CD4-positive, alpha-beta memory T cell (primary cell): ENCODE measurements at regions of chr6 and their contacts with region 1.

Region 1: DNA sequence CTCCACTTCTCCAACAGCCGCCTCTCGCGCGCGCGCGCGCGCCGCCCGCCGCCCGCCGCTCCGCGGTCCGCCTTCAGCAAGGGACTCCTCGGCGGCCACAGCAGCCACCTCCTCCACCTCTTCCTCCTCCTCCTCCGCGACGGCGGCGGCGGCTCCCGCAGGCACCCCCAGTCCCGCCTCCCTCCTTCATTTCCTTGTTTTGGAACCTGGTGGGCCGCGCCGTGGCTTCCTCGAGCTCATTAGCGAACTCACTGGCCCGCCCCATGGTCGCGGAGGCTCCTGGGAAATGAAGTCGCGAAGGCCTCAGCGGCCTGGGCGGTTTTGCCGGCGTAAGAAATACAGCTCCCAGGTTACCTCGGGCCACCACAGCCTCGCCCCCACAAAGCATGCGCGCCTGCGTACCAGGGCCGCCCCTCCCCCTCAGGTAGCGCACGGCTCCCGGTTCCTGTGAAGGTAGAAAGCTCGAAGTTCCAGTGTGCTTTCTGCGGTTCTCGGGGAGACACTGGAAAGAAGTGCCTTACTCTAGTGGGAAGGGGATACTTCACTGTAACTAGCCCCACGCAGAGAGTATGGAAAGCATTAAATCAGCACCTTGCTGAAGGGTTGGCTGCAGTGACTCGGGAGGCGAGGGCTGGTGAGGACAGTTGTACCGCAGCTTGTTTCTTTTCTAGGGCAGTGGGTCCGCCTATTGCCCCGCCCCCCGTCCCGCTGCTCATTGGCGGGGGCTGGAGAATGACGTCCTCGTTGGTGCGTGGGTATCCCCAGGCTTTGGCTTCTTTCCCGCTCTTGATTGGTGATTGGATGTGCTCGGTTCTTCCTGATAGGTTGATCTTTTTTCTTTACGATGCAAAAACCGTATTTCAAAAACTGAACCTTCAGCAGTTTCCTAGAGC is at the start of gene CDK19:
- DNase-seq: peak; percentile 99
- H3K4me3 ChIP-seq: peak within 1 kb of the TSS; percentile 85 to 91
- H3K4me3 Mint-ChIP-seq: peak within 1 kb of the TSS; percentile 95 to 100 (median 98)
- H3K27ac ChIP-seq: peak within 1 kb of the TSS; percentile 75
- H3K27ac Mint-ChIP-seq: peak within 1 kb of the TSS; percentile 98 to 100 (median 99)
- H3K4me1 ChIP-seq: peaks cover 26% of the 10 kb centered on the region
- H3K4me1 Mint-ChIP-seq: peaks cover 14 to 38% (median 20%) of the 10 kb centered on the region in 4 donors
- H3K27me3 ChIP-seq: no peaks in the 10 kb centered on the region
- H3K27me3 Mint-ChIP-seq: no peaks in the 10 kb centered on the region
- total RNA-seq, gene CDK19: 23.8 to 24.3 TPM

Region 2: DNA sequence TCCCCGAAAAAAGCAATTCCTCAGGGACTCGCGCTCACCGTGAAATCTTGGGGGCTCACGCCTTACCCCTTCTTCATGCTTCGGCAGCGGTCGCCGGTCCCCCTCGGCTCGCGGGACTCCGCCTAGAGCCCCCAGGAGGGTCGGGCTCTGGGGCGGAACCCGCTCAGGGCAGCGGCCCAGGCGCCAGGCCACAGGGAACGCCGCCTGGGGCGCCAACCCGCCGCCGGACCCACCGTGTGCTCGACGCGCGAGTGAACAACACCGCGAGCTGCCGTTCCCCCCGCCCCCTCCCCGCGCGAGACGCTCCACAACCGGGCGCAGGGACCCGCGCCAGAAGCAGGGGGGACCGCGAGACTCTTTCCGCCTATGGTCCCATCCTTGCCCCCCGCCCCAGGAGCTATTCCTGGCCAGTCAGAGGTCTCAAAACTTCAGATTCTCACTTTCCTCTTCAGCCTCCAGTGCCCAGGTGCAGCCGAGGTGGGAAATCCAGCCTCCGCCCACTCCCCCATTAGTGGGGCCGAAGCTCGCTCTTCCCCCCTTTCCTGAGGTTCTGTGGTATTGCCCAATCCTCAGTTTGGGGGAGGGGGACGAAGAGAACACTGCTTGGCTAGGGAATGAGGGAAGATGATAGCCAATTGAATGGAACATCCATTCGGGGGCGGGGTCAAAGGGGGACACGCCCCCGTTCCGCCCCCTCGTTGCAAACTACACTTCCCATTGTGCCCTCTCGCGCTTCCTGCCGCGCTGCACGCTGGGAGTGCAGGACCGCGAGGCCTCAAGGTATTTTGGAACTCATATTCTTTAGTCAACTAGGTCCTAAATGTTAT is 635.8 kb before region 1 on chr6 and contains the start of gene WASF1:
- CTCF ChIA-PET with region 1: no interaction called
- POLR2A ChIA-PET with region 1: interaction called, 5 read pairs
- intact Hi-C with region 1: loop called (anchors 1 kb)
- DNase-seq: peak; percentile 90 to 93 (median 92)
- H3K4me3 ChIP-seq: peak within 1 kb of the TSS; percentile 77 to 92
- H3K4me3 Mint-ChIP-seq: peak within 1 kb of the TSS; percentile 82 to 92 (median 86)
- H3K27ac ChIP-seq: peak within 1 kb of the TSS; percentile 88
- H3K27ac Mint-ChIP-seq: peak within 1 kb of the TSS; percentile 24 to 90 (median 64)
- H3K4me1 ChIP-seq: peaks cover 46% of the 10 kb centered on the region
- H3K4me1 Mint-ChIP-seq: peaks cover 5 to 7% (median 6%) of the 10 kb centered on the region in 4 donors
- H3K27me3 ChIP-seq: no peaks in the 10 kb centered on the region
- H3K27me3 Mint-ChIP-seq: peaks cover 4 to 5% of the 10 kb centered on the region in 2 donors
- total RNA-seq, gene WASF1: 0.39 to 0.70 TPM

Region 3: GRCh38 chr6:110618591-110619267 is 196.7 kb before region 1 on chr6:
- CTCF ChIA-PET with region 1: no interaction called
- POLR2A ChIA-PET with region 1: no interaction called
- intact Hi-C with region 1: no loop called
- DNase-seq: no peak
- H3K4me3 ChIP-seq: no peak overlapping the region
- H3K4me3 Mint-ChIP-seq: no peak overlapping the region
- H3K27ac ChIP-seq: no peak overlapping the region
- H3K27ac Mint-ChIP-seq: peak overlapping the region in 5 of 7 donors; percentile 26 to 60 (median 29)
- H3K4me1 ChIP-seq: no peaks in the 10 kb centered on the region
- H3K4me1 Mint-ChIP-seq: peaks cover 0 to 5% (median 0%) of the 10 kb centered on the region in 4 donors
- H3K27me3 ChIP-seq: no peaks in the 10 kb centered on the region
- H3K27me3 Mint-ChIP-seq: no peaks in the 10 kb centered on the region

Region 4: GRCh38 chr6:110682460-110682853 is 133.0 kb before region 1 on chr6:
- CTCF ChIA-PET with region 1: interaction called, 31 read pairs
- POLR2A ChIA-PET with region 1: interaction called, 22 read pairs
- intact Hi-C with region 1: loop called (anchors 1 kb)
- DNase-seq: peak; percentile 76 to 81 (median 78)
- H3K4me3 ChIP-seq: no peak overlapping the region
- H3K4me3 Mint-ChIP-seq: peak overlapping the region in 1 of 8 donors; percentile 0
- H3K27ac ChIP-seq: no peak overlapping the region
- H3K27ac Mint-ChIP-seq: peak overlapping the region in 4 of 7 donors; percentile 60 to 76 (median 69)
- H3K4me1 ChIP-seq: peaks cover 13% of the 10 kb centered on the region
- H3K4me1 Mint-ChIP-seq: peaks cover 11 to 24% (median 16%) of the 10 kb centered on the region in 4 donors
- H3K27me3 ChIP-seq: no peaks in the 10 kb centered on the region
- H3K27me3 Mint-ChIP-seq: no peaks in the 10 kb centered on the region

Region 5: GRCh38 chr6:110873981-110874879 is 58.8 kb after region 1 on chr6 and contains the start of gene AMD1:
- CTCF ChIA-PET with region 1: interaction called, 102 read pairs
- POLR2A ChIA-PET with region 1: interaction called, 535 read pairs
- intact Hi-C with region 1: loop called (anchors 1 kb)
- DNase-seq: peak; percentile 96 to 97 (median 97)
- H3K4me3 ChIP-seq: peak within 1 kb of the TSS; percentile 44 to 87
- H3K4me3 Mint-ChIP-seq: peak within 1 kb of the TSS; percentile 96 to 100 (median 99)
- H3K27ac ChIP-seq: peak within 1 kb of the TSS; percentile 87
- H3K27ac Mint-ChIP-seq: peak within 1 kb of the TSS; percentile 94 to 100 (median 99)
- H3K4me1 ChIP-seq: peaks cover 29% of the 10 kb centered on the region
- H3K4me1 Mint-ChIP-seq: peaks cover 28 to 51% (median 32%) of the 10 kb centered on the region in 4 donors
- H3K27me3 ChIP-seq: no peaks in the 10 kb centered on the region
- H3K27me3 Mint-ChIP-seq: no peaks in the 10 kb centered on the region
- total RNA-seq, gene AMD1: 62.2 to 63.1 TPM

Region 6: DNA sequence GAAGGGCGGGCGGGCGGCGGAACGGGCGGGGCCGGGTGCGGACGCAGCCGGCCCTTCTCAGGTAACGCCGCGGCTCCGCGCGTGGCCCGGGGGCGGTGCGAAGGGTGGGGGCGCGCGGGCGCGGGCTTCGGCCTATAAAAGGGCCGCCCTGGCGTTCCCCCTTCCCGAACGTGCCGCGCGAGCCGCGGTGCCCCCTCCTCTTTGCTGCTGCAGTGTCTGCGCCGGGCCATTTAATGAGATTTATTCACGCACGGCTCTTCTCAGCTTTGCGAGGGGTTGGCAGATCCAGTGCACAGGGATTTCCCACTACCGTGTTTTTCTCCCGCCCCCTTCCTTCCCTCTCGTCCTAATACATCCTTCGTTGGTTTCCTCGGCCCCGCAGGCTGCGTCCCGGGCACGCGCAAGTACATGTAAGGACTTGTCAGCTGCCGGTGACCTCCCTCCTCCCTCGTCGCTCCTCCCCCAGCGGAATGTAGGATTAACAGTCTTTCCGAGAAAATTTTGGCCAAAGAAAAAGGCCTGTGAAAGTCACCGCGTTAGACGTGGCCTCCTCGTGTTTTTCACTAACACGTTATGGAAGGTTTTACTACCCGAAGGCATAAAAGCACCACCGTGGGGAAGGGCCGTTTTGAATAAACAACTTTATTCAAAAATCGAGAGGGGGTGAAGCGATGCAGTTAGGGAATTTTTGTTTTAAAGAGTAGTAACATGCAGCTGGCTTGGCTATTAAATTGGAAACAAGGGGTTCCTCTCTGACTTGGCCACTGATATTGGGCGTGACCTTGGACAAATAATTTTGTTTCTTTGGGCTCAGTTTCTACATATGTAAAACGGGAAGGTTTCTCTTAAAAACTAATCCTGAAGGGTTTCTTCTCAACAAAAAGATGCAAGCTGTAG is 668.5 kb after region 1 on chr6:
- CTCF ChIA-PET with region 1: no interaction called
- POLR2A ChIA-PET with region 1: interaction called, 3 read pairs
- intact Hi-C with region 1: loop called (anchors 5 kb)
- DNase-seq: peak in 3 of 5 donors; percentile 89
- H3K4me3 ChIP-seq: peak overlapping the region; percentile 74
- H3K4me3 Mint-ChIP-seq: peak overlapping the region; percentile 91 to 99 (median 98)
- H3K27ac ChIP-seq: peak overlapping the region; percentile 80
- H3K27ac Mint-ChIP-seq: peak overlapping the region; percentile 97 to 100 (median 98)
- H3K4me1 ChIP-seq: peaks cover 57% of the 10 kb centered on the region
- H3K4me1 Mint-ChIP-seq: peaks cover 33 to 58% (median 45%) of the 10 kb centered on the region in 4 donors
- H3K27me3 ChIP-seq: no peaks in the 10 kb centered on the region
- H3K27me3 Mint-ChIP-seq: peaks cover 0 to 2% of the 10 kb centered on the region in 2 donors